Activated CD4-positive, alpha-beta memory T cell treated with anti-CD3 and anti-CD28 coated beads, Interleukin-2, amount 10 ng/mL, durations not matched to agents 7 days and 5 days (primary cell): ENCODE measurements at regions of chr1 and their contacts with region 1.

Region 1: GRCh38 chr1:11907275-11908094 is 18.7 kb downstream of the KIAA2013 start:
- DNase-seq: peak; percentile 93
- H3K4me3 Mint-ChIP-seq: peak overlapping the region; percentile 81
- H3K27ac Mint-ChIP-seq: peak overlapping the region; percentile 98
- H3K4me1 Mint-ChIP-seq: peaks cover 46% of the 10 kb centered on the region
- H3K27me3 Mint-ChIP-seq: peaks cover 16% of the 10 kb centered on the region

Region 2: DNA sequence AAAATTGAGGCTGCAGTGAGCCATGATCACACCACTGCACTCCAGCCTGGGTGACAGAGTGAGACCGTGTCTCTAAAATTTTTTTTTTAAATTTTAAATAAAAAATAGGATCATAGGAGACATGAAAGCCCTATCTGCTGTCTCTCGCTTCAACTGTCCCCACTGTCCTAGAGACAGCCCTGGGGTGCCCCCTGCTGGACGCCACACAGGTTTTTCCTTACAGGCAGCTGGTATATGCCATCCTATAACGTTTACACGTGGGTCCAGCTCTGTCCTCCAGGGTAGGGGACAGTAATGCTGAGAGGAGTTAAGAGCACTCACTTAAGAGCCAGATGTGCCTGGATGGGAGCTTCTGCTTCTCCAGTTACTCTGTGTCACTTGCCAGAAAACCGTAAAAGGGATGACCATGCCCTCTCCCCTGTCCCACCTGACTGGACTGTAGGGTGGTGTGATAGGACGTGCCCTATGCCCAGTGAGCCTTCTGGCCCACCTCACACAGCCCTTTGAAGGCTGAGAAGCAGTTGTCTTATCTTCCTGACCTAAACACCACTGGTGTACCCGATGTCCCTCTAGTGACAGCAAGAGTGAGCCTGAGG is 261.7 kb before region 1 on chr1:
- CTCF ChIA-PET with region 1: interaction called, 8 read pairs
- POLR2A ChIA-PET with region 1: interaction called, 56 read pairs
- DNase-seq: peak; percentile 85
- H3K4me3 Mint-ChIP-seq: no peak overlapping the region
- H3K27ac Mint-ChIP-seq: no peak overlapping the region
- H3K4me1 Mint-ChIP-seq: peaks cover 17% of the 10 kb centered on the region
- H3K27me3 Mint-ChIP-seq: peaks cover 7% of the 10 kb centered on the region

Region 3: DNA sequence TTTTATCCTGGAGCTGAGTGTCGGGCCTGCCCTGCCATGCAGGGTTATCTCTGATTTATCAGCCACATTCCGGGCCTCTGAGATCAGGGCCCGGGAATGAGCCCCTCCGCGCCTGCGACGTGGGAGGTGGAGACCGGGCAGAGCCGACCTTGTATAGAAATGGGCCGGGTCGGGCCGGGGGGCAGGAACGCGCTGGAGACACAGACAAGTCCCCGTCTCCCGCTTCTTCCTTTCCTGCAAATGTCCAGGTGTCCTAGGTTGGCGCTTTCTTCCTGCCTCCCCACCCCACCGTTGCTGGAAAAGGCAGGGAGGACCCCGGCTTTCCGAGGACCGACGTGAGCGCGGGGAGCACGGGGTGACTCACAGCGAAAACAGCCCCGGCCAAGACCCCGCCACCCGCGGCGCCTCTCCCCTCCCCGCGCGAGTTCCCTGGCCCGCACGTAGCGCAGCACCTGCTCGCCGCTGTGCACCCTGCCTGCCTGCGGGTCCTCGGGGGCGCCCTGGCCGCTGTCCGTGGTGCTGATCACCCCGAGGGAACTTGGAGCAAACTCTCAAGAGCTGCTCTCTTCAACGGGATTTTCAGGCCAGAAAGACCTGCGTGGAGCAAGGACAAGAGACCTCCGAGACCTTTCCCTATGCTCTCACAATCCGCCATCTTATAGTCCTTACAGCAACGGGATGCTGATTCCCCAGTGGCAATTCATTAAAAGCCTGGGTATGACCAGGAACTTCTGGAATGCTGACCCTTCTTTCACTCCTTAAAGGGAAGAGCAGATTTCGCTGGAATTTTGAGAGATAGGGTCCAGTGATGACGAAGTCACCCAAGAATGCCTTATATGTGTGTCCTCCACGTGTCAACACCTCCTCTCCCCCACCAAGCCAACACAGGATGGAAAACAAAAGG is 48.3 kb before region 1 on chr1:
- CTCF ChIA-PET with region 1: interaction called, 4 read pairs
- POLR2A ChIA-PET with region 1: interaction called, 14 read pairs
- DNase-seq: peak; percentile 73
- H3K4me3 Mint-ChIP-seq: no peak overlapping the region
- H3K27ac Mint-ChIP-seq: no peak overlapping the region
- H3K4me1 Mint-ChIP-seq: no peaks in the 10 kb centered on the region
- H3K27me3 Mint-ChIP-seq: peaks cover 58% of the 10 kb centered on the region

Region 4: DNA sequence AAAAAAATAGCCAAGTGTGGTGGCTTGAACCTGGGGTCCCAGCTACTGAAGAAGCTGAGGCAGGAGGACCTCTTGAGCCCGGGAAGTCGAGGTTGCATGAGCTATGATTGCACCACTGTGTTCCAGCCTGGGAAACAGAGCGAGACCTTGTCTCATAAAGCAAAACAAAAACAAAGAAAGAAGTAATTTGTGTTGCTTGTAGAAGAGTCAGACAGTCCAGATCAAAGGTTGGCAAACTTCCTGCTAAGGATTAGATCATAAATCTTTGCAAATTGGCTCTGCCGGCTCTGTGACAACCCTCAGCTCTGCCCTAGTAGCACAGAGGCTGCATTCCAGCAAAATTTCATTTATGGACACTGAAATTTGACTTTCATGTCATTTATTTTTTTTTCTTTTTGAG is 53.7 kb after region 1 on chr1:
- CTCF ChIA-PET with region 1: no interaction called
- POLR2A ChIA-PET with region 1: interaction called, 223 read pairs
- DNase-seq: no peak
- H3K4me3 Mint-ChIP-seq: no peak overlapping the region
- H3K27ac Mint-ChIP-seq: no peak overlapping the region
- H3K4me1 Mint-ChIP-seq: no peaks in the 10 kb centered on the region
- H3K27me3 Mint-ChIP-seq: no peaks in the 10 kb centered on the region

Region 5: GRCh38 chr1:12040457-12041051 is 133.1 kb after region 1 on chr1:
- CTCF ChIA-PET with region 1: no interaction called
- POLR2A ChIA-PET with region 1: interaction called, 124 read pairs
- DNase-seq: no peak
- H3K4me3 Mint-ChIP-seq: no peak overlapping the region
- H3K27ac Mint-ChIP-seq: peak overlapping the region; percentile 69
- H3K4me1 Mint-ChIP-seq: peaks cover 46% of the 10 kb centered on the region
- H3K27me3 Mint-ChIP-seq: peaks cover 1% of the 10 kb centered on the region

Region 6: DNA sequence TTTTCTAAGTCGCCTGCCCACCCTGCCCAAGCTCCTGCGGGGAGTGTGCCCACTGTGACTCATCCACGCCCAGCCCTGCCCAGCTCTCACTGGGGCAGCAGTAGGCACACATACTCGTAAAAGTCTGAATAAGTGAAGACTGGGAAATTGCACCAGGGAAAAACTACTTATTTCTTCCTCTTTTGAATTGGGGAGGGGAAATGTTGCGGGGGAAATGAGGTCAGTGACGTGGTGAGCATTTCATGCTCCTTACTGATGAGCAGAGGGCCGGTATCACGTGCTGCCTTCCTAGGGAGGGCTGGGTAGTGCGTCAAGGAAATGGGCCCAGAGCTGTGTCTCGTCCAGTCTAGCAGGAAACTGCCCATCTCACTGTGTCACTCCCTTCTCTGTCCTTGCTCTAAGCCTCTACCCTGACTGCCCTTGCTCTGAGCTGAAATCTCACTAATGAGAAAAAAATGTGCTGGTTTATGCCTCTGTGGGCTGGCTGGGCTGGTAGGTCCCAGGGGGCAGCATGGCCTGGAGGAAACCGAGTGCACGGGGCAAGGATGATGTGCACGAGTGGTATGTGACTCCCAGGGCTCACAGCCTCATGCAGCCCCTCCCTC is 245.8 kb after region 1 on chr1:
- CTCF ChIA-PET with region 1: no interaction called
- POLR2A ChIA-PET with region 1: interaction called, 33 read pairs
- DNase-seq: peak; percentile 51
- H3K4me3 Mint-ChIP-seq: no peak overlapping the region
- H3K27ac Mint-ChIP-seq: peak overlapping the region; percentile 98
- H3K4me1 Mint-ChIP-seq: peaks cover 91% of the 10 kb centered on the region
- H3K27me3 Mint-ChIP-seq: no peaks in the 10 kb centered on the region

Region 7: GRCh38 chr1:12511516-12512468 is 604.3 kb after region 1 on chr1:
- CTCF ChIA-PET with region 1: no interaction called
- POLR2A ChIA-PET with region 1: interaction called, 12 read pairs
- DNase-seq: no peak
- H3K4me3 Mint-ChIP-seq: peak overlapping the region; percentile 79
- H3K27ac Mint-ChIP-seq: peak overlapping the region; percentile 95
- H3K4me1 Mint-ChIP-seq: peaks cover 36% of the 10 kb centered on the region
- H3K27me3 Mint-ChIP-seq: no peaks in the 10 kb centered on the region